PC-9 (cell line): ENCODE measurements at regions of chr1 and their contacts with region 1.

Region 1: DNA sequence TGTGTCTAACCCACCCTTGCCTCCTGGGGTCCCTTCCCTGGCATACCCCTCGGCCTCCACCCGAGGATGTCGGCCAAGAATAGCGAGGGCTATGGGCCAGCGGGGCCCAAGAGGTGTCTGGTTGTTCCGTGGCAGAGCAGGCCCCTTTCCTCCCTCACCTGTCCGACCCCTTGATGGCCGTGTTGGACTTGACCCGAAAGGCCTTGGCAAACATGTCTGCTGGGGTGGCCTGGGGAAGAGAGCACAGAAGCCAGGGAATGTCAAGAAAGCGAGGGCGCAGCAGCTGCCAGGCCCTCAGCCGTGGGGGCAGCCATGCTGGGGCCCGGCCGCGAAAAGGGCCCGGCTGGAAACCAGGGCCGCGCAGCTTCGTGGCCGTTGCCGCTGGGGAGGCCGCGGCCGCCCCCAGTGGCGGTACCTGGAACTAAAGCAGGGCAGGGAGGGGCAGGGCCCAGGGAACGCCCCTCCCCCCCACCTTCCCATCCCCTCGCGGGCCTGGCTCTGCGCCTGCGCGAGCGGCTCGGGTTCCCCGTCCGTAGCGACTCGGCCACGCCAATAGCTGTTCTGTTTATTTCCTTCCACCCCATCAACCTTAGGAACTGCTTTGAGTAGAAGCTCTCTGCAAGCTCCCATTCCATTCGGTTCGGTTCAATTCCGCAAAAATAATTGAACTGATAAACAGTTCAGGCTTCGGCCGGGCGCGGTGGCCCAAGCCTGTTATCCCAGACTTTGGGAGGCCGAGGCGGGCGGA is at the start of gene EIF2D:
- DNase-seq: peak; percentile 77 to 97
- H3K4me3 ChIP-seq: peak within 1 kb of the TSS; percentile 76
- H3K27ac ChIP-seq: peak within 1 kb of the TSS; percentile 59
- H3K4me1 ChIP-seq: peaks cover 8% of the 10 kb centered on the region
- H3K27me3 ChIP-seq: no peaks in the 10 kb centered on the region
- CTCF ChIP-seq: peak; percentile 93
- total RNA-seq, gene EIF2D: 57.3 and 59.0 TPM in 2 replicates

Region 2: GRCh38 chr1:206419250-206419649 is 193.1 kb before region 1 on chr1:
- CTCF ChIA-PET with region 1: no interaction called
- POLR2A ChIA-PET with region 1: no interaction called
- intact Hi-C with region 1: no loop called
- DNase-seq: peak; percentile 66 to 89
- H3K4me3 ChIP-seq: peak overlapping the region; percentile 38; the same call in 1 of the 2 replicates
- H3K27ac ChIP-seq: peak overlapping the region; percentile 97
- H3K4me1 ChIP-seq: peaks cover 41% of the 10 kb centered on the region
- H3K27me3 ChIP-seq: no peaks in the 10 kb centered on the region
- CTCF ChIP-seq: no peak

Region 3: GRCh38 chr1:206489980-206490770 is 122.1 kb before region 1 on chr1:
- CTCF ChIA-PET with region 1: interaction called, 11 read pairs
- POLR2A ChIA-PET with region 1: no interaction called
- intact Hi-C with region 1: no loop called
- DNase-seq: peak; percentile 51 to 71
- H3K4me3 ChIP-seq: no peak overlapping the region
- H3K27ac ChIP-seq: no peak overlapping the region
- H3K4me1 ChIP-seq: no peaks in the 10 kb centered on the region
- H3K27me3 ChIP-seq: no peaks in the 10 kb centered on the region
- CTCF ChIP-seq: peak; percentile 91

Region 4: GRCh38 chr1:206579747-206580437 is 32.4 kb before region 1 on chr1:
- CTCF ChIA-PET with region 1: no interaction called
- POLR2A ChIA-PET with region 1: no interaction called
- intact Hi-C with region 1: no loop called
- DNase-seq: peak in 1 of 2 experiments; percentile 52
- H3K4me3 ChIP-seq: no peak overlapping the region
- H3K27ac ChIP-seq: no peak overlapping the region
- H3K4me1 ChIP-seq: peaks cover 10% of the 10 kb centered on the region; the same call in 1 of the 2 replicates
- H3K27me3 ChIP-seq: no peaks in the 10 kb centered on the region
- CTCF ChIP-seq: no peak

Region 5: GRCh38 chr1:207077470-207078377 is 465.4 kb after region 1 on chr1:
- CTCF ChIA-PET with region 1: no interaction called
- POLR2A ChIA-PET with region 1: no interaction called
- intact Hi-C with region 1: loop called (anchors 5 kb)
- DNase-seq: peak; percentile 61 to 67
- H3K4me3 ChIP-seq: no peak overlapping the region
- H3K27ac ChIP-seq: no peak overlapping the region
- H3K4me1 ChIP-seq: no peaks in the 10 kb centered on the region
- H3K27me3 ChIP-seq: no peaks in the 10 kb centered on the region
- CTCF ChIP-seq: peak; percentile 95

Region 6: DNA sequence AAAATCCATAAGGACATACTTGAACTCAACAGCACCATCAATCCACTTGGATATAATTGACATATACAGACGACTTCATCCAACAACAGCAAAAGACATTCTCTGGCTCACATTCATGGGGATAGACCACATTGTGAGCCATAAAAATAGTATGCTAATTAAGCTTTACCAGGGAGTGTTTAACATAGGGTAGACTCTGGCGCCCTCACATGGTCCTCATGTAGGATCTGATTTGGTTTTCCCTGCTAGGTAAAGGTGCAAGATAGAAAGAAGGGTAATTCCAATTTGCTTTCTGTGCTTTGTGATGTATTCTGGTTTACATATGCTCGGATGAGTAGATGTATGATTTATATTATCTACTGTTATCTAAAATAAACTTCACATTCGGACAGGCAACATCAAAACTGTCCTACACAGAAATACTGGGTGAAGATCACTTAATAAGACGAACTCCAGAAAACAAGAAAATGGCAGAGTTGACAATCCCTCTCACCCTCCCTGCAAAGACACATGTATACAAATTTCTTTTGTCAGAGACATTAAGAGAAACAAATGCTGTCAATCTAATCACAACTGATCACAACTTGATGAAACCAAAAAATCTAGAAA is 1060.3 kb after region 1 on chr1:
- CTCF ChIA-PET with region 1: no interaction called
- POLR2A ChIA-PET with region 1: interaction called, 10 read pairs
- intact Hi-C with region 1: no loop called
- DNase-seq: peak in 1 of 2 experiments; percentile 11
- H3K4me3 ChIP-seq: no peak overlapping the region
- H3K27ac ChIP-seq: no peak overlapping the region
- H3K4me1 ChIP-seq: 0 out of 2 replicates have a peak, but pooled peaks cover 4% of the 10 kb centered on the region
- H3K27me3 ChIP-seq: no peaks in the 10 kb centered on the region
- CTCF ChIP-seq: peak; percentile 66